Naive thymus-derived CD4-positive, alpha-beta T cell (primary cell): ENCODE measurements at regions of chr1 and their contacts with region 1.

Region 1: GRCh38 chr1:32072622-32073298 is at the start of gene TMEM39B:
- DNase-seq: peak; percentile 90 to 97 (median 96)
- ATAC-seq: peak; percentile 92
- H3K4me3 ChIP-seq: peak within 1 kb of the TSS; percentile 98
- H3K4me3 Mint-ChIP-seq: peak within 1 kb of the TSS; percentile 83 to 94 (median 91)
- H3K27ac ChIP-seq: peak within 1 kb of the TSS; percentile 82
- H3K27ac Mint-ChIP-seq: peak within 1 kb of the TSS; percentile 84 to 95 (median 92)
- H3K4me1 ChIP-seq: peaks cover 5 to 16% of the 10 kb centered on the region in 2 donors
- H3K4me1 Mint-ChIP-seq: peaks cover 21 to 58% (median 47%) of the 10 kb centered on the region in 7 donors
- H3K27me3 ChIP-seq: no peaks in the 10 kb centered on the region
- H3K27me3 Mint-ChIP-seq: no peaks in the 10 kb centered on the region
- total RNA-seq, gene TMEM39B: 11.4 to 35.9 (median 26.4) TPM

Region 2: DNA sequence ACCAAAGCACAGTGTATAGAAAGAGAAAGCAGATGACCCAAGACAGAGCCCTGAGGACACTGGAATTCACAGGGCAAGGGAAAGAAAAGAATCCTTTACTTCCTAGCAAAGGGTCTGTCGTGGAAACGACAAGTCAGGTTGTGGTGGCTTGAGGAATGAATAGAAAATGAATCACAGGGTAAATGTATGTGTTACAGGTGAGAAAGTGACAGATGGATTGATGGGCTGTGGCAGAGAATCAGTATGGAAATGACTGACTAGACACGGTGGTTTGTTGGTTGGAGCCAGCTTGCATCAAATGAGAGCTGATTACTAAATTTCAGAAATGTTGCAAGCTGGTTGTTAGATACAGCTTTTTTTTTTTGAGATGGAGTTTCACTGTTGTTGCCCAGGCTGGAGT is 181.5 kb before region 1 on chr1:
- CTCF ChIA-PET with region 1: no interaction called
- POLR2A ChIA-PET with region 1: no interaction called
- intact Hi-C with region 1: loop called in 1 of 2 experiments (anchors 2 kb)
- DNase-seq: no peak
- ATAC-seq: no peak
- H3K4me3 ChIP-seq: no peak overlapping the region
- H3K4me3 Mint-ChIP-seq: peak overlapping the region in 2 of 10 donors; percentile 0 to 1
- H3K27ac ChIP-seq: no peak overlapping the region
- H3K27ac Mint-ChIP-seq: peak overlapping the region in 4 of 9 donors; percentile 1 to 98 (median 37)
- H3K4me1 ChIP-seq: peaks cover 13 to 21% of the 10 kb centered on the region in 2 donors
- H3K4me1 Mint-ChIP-seq: peaks cover 14 to 30% (median 21%) of the 10 kb centered on the region in 7 donors
- H3K27me3 ChIP-seq: no peaks in the 10 kb centered on the region
- H3K27me3 Mint-ChIP-seq: no peaks in the 10 kb centered on the region

Region 3: DNA sequence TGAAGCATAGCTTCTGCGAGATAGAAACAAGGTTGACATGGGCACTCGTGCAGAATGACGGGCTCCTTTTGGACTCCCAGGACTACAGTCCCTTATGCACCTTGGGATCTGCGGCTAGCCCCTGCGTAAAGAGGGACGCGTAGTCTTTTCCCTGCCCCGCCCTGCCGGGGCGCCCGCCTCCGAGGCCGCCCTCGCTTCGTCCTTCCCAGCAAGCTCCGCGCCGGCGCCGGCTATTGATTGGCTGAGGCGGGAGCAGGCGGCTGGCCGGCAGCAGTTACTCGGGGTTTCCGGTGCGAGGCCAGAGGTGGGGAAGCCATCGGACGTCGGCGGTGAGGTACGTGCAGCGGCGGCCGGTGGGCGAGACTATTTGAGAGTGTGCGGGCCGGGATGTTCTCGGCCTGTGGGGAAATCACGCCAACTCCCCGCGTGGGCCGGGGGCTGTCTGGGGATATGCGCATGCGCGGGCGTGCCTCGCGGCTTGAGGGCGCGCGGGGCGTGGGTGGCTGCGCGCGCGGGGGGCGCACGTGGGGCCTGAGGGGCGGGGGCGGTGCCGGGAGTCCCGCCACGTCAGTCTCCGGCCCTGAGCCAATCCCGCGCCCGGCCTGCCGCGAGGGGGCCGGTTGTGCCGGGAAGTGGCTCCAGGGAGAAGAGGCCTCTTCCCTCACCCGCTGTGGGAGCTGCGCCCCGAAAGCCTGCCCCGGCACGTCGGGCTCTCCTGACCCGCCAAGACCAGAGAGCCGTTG is 106.9 kb after region 1 on chr1 and contains the start of gene TXLNA:
- CTCF ChIA-PET with region 1: no interaction called
- POLR2A ChIA-PET with region 1: interaction called, 3 read pairs
- intact Hi-C with region 1: loop called (anchors 1 to 2 kb)
- DNase-seq: peak; percentile 80 to 93 (median 86)
- ATAC-seq: peak; percentile 91
- H3K4me3 ChIP-seq: peak within 1 kb of the TSS; percentile 89
- H3K4me3 Mint-ChIP-seq: peak within 1 kb of the TSS; percentile 86 to 94 (median 91)
- H3K27ac ChIP-seq: peak within 1 kb of the TSS; percentile 89
- H3K27ac Mint-ChIP-seq: peak within 1 kb of the TSS; percentile 84 to 98 (median 92)
- H3K4me1 ChIP-seq: peaks cover 17 to 21% of the 10 kb centered on the region in 2 donors
- H3K4me1 Mint-ChIP-seq: peaks cover 22 to 45% (median 38%) of the 10 kb centered on the region in 7 donors
- H3K27me3 ChIP-seq: no peaks in the 10 kb centered on the region
- H3K27me3 Mint-ChIP-seq: no peaks in the 10 kb centered on the region
- total RNA-seq, gene TXLNA: 16.7 to 83.3 (median 36.3) TPM

Region 4: DNA sequence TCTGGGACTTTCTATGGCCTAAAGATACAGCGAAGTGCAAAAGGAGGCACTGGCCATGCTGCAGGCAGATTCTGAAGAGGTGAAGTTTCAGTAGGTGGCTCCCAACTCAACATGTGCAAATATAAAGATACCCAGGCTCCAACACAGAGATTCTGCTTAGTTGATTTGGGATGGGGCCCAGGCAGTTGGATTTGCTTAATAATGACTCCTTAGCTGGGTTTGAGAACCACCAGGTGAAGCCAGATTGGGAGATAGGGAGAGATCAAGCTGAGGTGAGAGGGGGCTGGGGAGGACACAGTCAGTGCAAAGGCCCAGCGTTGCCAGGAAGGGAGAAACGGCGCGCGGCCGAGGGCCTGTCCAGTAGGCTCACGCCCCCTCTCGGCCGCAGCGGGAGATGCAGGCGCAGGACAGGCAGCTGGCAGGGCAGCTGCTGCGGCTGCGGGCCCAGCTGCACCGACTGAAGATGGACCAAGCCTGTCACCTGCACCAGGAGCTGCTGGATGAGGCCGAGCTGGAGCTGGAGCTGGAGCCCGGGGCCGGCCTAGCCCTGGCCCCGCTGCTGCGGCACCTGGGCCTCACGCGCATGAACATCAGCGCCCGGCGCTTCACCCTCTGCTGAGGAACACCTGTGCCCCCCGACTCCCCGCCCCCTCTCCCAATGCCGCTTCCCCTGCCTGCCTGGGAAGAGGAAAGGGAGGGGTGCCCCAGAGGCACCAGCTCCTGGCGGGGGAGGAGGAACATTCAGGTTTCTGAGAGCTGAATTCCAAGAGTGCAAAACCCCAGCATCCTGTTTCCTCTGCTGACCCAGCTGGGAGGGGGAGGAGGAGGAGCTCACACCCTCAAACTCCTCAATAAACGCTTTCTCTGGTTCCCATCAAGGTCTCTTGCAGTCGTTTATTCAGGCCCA is 175.5 kb after region 1 on chr1:
- CTCF ChIA-PET with region 1: no interaction called
- POLR2A ChIA-PET with region 1: no interaction called
- intact Hi-C with region 1: loop called in 1 of 2 experiments (anchors 1 kb)
- DNase-seq: peak; percentile 43 to 84 (median 56)
- ATAC-seq: peak; percentile 45
- H3K4me3 ChIP-seq: peak overlapping the region; percentile 52
- H3K4me3 Mint-ChIP-seq: peak overlapping the region; percentile 66 to 100 (median 98)
- H3K27ac ChIP-seq: peak overlapping the region; percentile 91
- H3K27ac Mint-ChIP-seq: peak overlapping the region; percentile 92 to 100 (median 99)
- H3K4me1 ChIP-seq: peaks cover 37 to 51% of the 10 kb centered on the region in 2 donors
- H3K4me1 Mint-ChIP-seq: peaks cover 32 to 60% (median 52%) of the 10 kb centered on the region in 7 donors
- H3K27me3 ChIP-seq: no peaks in the 10 kb centered on the region
- H3K27me3 Mint-ChIP-seq: peaks cover 0 to 2% (median 0%) of the 10 kb centered on the region in 5 donors